AG04450 (cell line): ENCODE measurements at regions of chr20 and their contacts with region 1.

Region 1: GRCh38 chr20:53865901-53866794 is 204.2 kb downstream of the BCAS1 start:
- DNase-seq: peak; percentile 27
- H3K4me3 ChIP-seq: peak overlapping the region; percentile 31
- H3K27ac ChIP-seq: peak overlapping the region; percentile 77
- H3K27me3 ChIP-seq: no peaks in the 10 kb centered on the region
- CTCF ChIP-seq: no peak

Region 2: DNA sequence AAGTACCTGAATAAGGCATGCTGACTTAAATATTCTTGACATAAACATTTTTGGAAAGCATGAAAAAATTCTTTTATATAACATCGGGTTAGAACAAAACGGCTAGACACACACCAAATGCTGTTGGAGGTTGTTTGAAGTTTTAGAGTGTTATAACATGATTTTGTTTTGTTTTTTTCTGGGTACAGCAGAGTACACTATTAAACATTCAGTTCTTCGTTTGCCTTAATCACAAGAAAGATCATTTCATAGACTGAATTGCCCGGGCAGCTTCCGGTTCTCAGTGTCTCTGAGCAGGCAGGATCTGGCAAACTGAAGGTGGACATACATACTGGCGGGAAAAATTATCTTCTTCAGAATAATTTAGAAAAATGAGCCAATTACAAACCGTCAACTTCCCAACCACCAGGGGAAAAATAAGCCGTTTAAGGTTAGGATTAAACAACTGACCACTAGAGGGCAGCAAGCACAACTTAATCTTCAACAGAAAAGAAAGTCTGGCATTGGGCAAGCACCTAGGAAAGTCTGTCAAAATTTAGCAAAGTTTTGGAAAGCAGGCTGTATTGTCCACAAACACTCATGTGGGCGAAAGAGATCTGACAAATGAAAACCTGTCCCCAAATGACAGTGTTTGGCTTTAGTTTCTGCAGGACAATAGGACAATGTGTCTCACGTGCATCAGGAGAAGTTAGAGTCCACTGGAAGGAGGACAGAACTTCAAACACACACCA is 287.5 kb before region 1 on chr20:
- CTCF ChIA-PET with region 1: interaction called, 11 read pairs
- POLR2A ChIA-PET with region 1: no interaction called
- DNase-seq: peak; percentile 77
- H3K4me3 ChIP-seq: peak overlapping the region; percentile 31; the same call in 1 of the 2 replicates
- H3K27ac ChIP-seq: no peak overlapping the region
- H3K27me3 ChIP-seq: no peaks in the 10 kb centered on the region
- CTCF ChIP-seq: peak; percentile 83

Region 3: DNA sequence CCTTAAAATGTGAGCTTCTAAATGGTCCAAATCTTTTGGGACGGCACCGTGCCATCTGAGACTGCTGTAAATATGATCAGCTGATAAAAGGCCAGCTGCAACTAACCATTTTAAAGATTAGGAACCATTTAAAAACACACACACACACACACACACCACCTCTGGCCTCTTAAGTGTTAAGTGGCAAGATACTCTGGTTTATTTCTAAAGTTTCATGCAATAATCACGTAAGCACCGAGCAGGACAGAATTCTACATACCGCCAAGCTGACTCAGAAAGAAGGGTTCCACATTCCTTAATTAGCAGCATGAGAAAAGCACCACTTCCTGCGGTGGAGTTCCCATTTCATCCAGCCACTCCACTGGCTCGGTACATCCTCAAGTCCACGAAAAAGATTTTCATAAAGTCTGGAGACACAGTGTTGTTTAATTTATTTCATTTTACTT is 254.7 kb before region 1 on chr20:
- CTCF ChIA-PET with region 1: no interaction called
- POLR2A ChIA-PET with region 1: interaction called, 10 read pairs
- DNase-seq: peak; percentile 92
- H3K4me3 ChIP-seq: no peak overlapping the region
- H3K27ac ChIP-seq: peak overlapping the region; percentile 83
- H3K27me3 ChIP-seq: no peaks in the 10 kb centered on the region
- CTCF ChIP-seq: no peak

Region 4: DNA sequence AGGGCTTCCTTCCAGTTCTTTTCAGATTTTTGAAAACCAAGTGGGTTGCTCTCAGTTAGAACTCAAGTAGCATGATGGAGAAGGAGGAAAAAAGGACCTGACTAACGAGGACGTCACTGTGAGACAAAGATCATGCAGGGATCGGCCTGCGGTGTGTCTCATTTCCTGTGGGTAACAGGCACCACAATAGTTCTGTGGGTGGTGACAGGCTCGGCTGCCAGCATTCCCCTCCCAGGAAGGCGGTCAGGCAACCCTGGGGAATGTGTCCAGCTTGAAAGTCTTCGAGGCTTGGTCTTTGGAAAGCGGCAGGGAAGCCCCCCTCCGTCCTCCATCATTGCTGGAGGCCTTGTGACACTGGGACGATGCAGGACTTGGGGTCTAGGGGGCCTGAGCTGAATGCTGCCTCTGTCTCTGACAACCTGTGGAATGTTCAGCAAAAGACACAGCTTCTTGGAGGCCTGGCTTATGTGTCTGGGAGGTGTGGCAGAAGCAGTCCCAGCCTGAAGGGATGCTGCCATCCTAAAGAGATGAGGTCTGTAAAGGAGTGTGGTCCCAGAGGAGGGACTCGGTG is 83.3 kb after region 1 on chr20:
- CTCF ChIA-PET with region 1: no interaction called
- POLR2A ChIA-PET with region 1: no interaction called
- DNase-seq: no peak
- H3K4me3 ChIP-seq: no peak overlapping the region; the same call in 1 of the 2 replicates
- H3K27ac ChIP-seq: peak overlapping the region; percentile 52
- H3K27me3 ChIP-seq: no peaks in the 10 kb centered on the region
- CTCF ChIP-seq: no peak

Region 5: GRCh38 chr20:54017809-54018208 is 151.7 kb after region 1 on chr20:
- CTCF ChIA-PET with region 1: no interaction called
- POLR2A ChIA-PET with region 1: no interaction called
- DNase-seq: no peak
- H3K4me3 ChIP-seq: no peak overlapping the region
- H3K27ac ChIP-seq: no peak overlapping the region
- H3K27me3 ChIP-seq: no peaks in the 10 kb centered on the region
- CTCF ChIP-seq: no peak